Dendritic cell treated with granulocyte-macrophage colony-stimulating factor and Interleukin-4, amounts not matched to agents 40 ng/mL and 50 ng/mL, for 4 days (primary cell): ENCODE measurements at regions of chr2 and their contacts with region 1.

Region 1: GRCh38 chr2:186485871-186486650 is at the start of gene ZC3H15:
- H3K4me3 Mint-ChIP-seq: peak within 1 kb of the TSS; percentile 94
- H3K27ac Mint-ChIP-seq: peak within 1 kb of the TSS; percentile 95
- H3K4me1 Mint-ChIP-seq: peaks cover 31% of the 10 kb centered on the region
- H3K27me3 Mint-ChIP-seq: no peaks in the 10 kb centered on the region

Region 2: DNA sequence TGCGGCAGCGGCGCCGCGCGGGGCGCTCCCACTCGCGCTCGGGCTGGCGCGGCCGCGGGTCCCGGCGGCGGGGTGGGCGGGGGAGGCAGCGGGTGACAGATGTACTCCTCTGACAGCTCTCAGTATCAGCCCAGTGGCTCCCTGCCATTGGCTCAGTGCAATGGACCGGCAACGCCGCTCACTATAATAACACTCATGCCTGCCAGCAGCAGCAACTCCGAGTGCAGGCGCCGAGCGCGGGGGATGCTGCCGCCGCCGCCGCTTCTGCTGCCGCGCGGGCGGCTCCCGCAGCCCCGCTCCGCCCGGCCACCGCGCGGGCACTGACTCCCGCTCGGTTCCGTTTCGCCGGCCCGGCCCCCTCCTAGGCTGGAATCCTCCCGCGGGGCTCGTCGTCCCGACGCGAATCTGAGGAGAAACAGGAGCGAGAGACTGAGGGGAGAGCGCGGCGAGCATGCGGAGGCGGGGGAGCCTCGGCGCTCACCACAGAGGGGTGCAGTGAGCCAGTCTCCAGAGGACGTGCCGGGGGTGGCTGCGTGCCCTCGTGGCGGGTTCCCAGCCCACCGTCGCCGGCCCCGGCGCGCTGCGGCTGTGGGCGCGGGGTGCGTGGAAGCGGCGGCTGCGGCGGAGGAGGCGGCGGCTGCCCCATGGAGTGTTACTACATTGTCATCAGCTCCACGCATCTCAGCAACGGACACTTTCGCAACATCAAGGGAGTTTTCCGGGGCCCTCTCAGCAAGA is 1887.6 kb before region 1 on chr2 and contains the start of gene ZNF804A:
- intact Hi-C with region 1: loop called (anchors 5 kb)
- H3K4me3 Mint-ChIP-seq: peak within 1 kb of the TSS; percentile 84
- H3K27ac Mint-ChIP-seq: peak within 1 kb of the TSS; percentile 95
- H3K4me1 Mint-ChIP-seq: peaks cover 38% of the 10 kb centered on the region
- H3K27me3 Mint-ChIP-seq: no peaks in the 10 kb centered on the region

Region 3: DNA sequence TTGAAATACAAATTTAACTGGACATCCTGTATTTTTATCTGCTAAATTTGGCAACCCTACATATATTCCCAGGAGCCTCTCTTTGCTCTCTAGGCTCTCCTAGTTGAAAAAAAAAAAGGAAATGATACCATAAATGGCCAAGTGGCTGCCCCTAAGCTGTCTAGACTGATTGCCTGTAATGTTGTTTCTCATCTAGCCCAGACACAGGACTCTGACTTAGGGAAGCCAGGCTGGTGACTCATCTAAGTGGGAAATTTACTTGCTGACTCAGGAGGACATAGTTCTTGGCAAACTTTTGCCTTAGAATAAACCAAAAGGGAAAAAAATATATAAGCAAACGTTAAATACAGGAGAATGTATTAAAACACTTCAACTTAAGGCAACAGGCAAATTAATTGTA is 89.2 kb after region 1 on chr2:
- intact Hi-C with region 1: loop called (anchors 5 kb)
- H3K4me3 Mint-ChIP-seq: no peak overlapping the region
- H3K27ac Mint-ChIP-seq: peak overlapping the region; percentile 51
- H3K4me1 Mint-ChIP-seq: peaks cover 20% of the 10 kb centered on the region
- H3K27me3 Mint-ChIP-seq: no peaks in the 10 kb centered on the region

Region 4: DNA sequence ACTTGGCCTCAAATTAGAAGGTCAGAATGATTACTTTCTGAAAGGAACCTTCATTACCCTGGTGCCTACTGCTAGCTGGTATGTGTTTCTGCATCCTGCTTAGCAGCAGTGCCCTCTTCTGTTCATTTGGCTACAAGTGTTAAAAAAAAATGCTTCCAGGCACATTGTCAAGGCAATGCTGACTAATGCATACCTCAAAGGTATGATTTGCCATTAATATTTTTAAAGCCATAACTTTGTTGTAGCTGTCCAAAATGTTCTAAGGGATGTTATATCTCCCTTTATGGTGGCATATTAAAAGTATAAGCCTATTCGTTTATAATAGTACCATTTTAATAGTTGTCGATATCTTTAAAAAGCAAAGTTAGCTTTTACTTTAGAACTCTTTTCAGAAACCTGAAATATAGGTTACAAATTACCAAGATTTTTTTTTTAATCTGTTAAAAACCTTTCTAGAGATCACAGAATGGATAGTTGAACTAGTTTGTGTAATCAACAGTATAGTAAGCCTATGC is 155.8 kb after region 1 on chr2:
- intact Hi-C with region 1: loop called (anchors 5 kb)
- H3K4me3 Mint-ChIP-seq: no peak overlapping the region
- H3K27ac Mint-ChIP-seq: no peak overlapping the region
- H3K4me1 Mint-ChIP-seq: peaks cover 35% of the 10 kb centered on the region
- H3K27me3 Mint-ChIP-seq: no peaks in the 10 kb centered on the region